ENCODE measurements at regions of chr10 and their contacts with region 1.

Region 1: DNA sequence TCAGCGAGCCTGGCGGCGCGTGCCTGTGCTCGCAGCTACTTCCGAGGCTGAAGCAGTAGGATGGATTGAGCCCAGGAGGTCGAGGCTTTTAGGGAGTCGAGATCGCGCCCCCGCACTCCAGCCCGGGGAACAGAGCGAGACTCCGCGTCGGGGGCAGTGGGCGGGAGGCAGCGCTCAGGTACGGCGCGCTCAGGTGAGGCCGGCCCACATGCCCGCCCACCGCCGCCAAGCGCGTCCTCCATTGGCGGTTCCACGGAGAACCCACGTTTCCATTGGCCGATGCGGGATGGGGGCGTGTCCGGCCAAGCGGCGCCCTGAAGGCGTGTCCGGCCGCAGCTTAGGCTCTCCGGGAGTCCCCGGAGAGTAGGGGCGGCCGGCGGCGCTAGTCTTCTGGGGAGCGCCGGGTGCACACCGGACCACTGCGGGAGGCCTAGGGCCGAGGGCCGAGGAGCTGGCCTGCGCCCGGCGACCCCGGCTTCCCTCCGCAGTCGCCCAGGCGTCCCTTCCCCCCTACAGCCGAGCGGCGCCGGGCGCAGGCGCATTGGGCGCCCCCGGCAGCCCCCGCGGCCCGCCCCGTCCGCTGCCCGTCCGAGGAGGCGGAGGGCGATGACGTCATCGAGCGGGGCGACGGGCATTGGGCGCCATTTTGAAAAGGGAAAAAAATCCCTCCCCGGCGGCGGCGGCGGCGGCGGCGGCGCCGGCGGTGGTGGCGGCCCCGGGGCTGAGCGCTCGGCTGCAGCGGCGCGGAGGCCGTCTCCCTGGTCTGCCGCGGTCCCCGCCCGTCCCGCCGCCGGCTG is at the start of gene PPP2R2D:
- DNase-seq: peak; percentile 94 to 96 (median 95)
- ATAC-seq: peak; percentile 96 to 98 (median 96)
- H3K4me3 ChIP-seq: peak within 1 kb of the TSS; percentile 70 to 100 (median 89)
- H3K27ac ChIP-seq: peak within 1 kb of the TSS; percentile 92 to 99 (median 98)
- H3K4me1 ChIP-seq: peaks cover 0 to 46% (median 38%) of the 10 kb centered on the region in 12 donors
- H3K27me3 ChIP-seq: peaks cover 0 to 13% (median 4%) of the 10 kb centered on the region in 9 donors
- CTCF ChIP-seq: no peak
- POLR2A ChIP-seq: peak in 1 of 2 donors; percentile 65
- total RNA-seq, gene PPP2R2D: 29.4 to 43.4 (median 37.3) TPM

Region 2: DNA sequence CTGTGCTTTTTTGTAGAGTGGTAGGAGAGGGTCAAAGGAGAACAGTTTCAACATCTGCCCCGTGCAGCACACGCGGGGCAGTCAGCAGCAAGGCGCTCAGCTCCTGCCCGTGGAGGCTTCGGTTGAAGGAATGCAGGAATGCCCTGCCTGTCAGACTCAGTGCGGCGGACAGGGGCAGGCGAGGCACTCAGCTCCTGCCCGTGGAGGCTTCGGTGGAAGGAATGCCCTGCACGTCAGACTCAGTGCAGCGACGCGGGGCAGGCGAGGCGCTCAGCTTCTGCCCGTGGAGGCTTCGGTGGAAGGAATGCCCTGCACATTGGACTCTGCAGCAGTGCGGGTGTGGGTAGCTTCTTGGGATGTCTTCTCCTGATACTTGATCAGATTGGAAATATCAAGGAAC is 37.3 kb after region 1 on chr10:
- intact Hi-C with region 1: loop called in 3 of 10 experiments (anchors 5 kb)
- DNase-seq: peak in 2 of 5 donors; percentile 46 to 53
- ATAC-seq: peak; percentile 77 to 91 (median 89)
- H3K4me3 ChIP-seq: no peak overlapping the region
- H3K27ac ChIP-seq: no peak overlapping the region
- H3K4me1 ChIP-seq: peaks cover 0 to 45% (median 13%) of the 10 kb centered on the region in 12 donors
- H3K27me3 ChIP-seq: no peaks in the 10 kb centered on the region
- CTCF ChIP-seq: no peak
- POLR2A ChIP-seq: no peak

Region 3: GRCh38 chr10:131943021-131943814 is 42.7 kb after region 1 on chr10:
- intact Hi-C with region 1: loop called in 3 of 10 experiments (anchors 5 kb)
- DNase-seq: peak in 1 of 5 donors; percentile 48
- ATAC-seq: peak; percentile 75 to 85 (median 78)
- H3K4me3 ChIP-seq: no peak overlapping the region
- H3K27ac ChIP-seq: no peak overlapping the region
- H3K4me1 ChIP-seq: peaks cover 0 to 5% (median 0%) of the 10 kb centered on the region in 12 donors
- H3K27me3 ChIP-seq: no peaks in the 10 kb centered on the region
- CTCF ChIP-seq: peak; percentile 17 to 54 (median 34)
- POLR2A ChIP-seq: no peak

Region 4: GRCh38 chr10:131972474-131973071 is 72.0 kb after region 1 on chr10:
- intact Hi-C with region 1: loop called in 7 of 10 experiments (anchors 5 to 10 kb)
- DNase-seq: peak; percentile 78 to 85 (median 84)
- ATAC-seq: peak; percentile 70 to 89 (median 73)
- H3K4me3 ChIP-seq: peak overlapping the region in 8 of 12 donors; percentile 5 to 24 (median 10)
- H3K27ac ChIP-seq: peak overlapping the region in 11 of 12 donors; percentile 40 to 82 (median 72)
- H3K4me1 ChIP-seq: peaks cover 10 to 55% (median 32%) of the 10 kb centered on the region in 12 donors
- H3K27me3 ChIP-seq: no peaks in the 10 kb centered on the region
- CTCF ChIP-seq: no peak
- POLR2A ChIP-seq: no peak

Region 5: DNA sequence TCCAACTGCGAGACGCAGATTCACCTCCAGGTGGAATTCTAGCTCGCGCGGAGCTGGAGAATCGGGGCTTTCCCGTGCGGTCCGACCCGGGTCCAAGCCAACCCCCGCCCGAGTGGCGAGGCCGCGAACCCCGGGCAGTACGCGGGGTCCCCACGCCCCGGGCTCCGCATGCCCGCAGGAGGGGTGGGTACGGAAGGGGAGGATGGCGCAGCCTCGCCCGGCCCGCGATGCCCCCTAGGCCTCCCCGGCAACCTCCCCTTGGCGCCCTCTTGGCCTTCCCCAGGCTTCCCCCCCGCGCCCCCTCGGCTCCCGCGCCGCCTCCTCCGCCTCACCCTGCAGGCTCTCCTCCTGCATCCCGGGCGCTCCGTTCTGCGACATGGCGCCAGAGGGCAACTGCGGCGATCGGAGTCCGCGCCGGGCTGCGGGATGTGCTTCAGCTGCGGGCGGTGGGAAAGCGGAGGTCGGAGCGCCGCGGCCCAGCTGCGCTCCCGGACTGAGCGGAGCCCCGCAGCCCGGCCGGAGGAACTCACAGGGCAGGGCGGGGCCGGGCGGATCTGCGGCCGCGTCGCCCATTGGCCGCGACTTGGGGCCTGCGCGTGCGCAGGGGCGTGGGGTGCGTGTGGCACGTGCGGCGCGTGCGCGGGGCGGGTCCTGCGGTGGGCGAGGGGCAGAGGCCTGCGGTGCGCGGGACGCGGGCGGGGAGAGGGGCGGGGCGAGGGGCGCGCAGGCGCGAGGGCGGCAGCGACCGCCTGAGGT is 81.1 kb after region 1 on chr10 and contains the start of gene BNIP3:
- intact Hi-C with region 1: loop called in 5 of 10 experiments (anchors 5 to 10 kb)
- DNase-seq: peak; percentile 95 to 99 (median 96)
- ATAC-seq: peak; percentile 89 to 95 (median 92)
- H3K4me3 ChIP-seq: peak within 1 kb of the TSS; percentile 72 to 99 (median 90)
- H3K27ac ChIP-seq: peak within 1 kb of the TSS; percentile 6 to 90 (median 80)
- H3K4me1 ChIP-seq: peaks cover 0 to 51% (median 28%) of the 10 kb centered on the region in 12 donors
- H3K27me3 ChIP-seq: peaks cover 0 to 9% (median 0%) of the 10 kb centered on the region in 9 donors
- CTCF ChIP-seq: peak in 1 of 12 donors; percentile 14
- POLR2A ChIP-seq: peak; percentile 95 to 99
- total RNA-seq, gene BNIP3: 97.1 to 711 (median 130) TPM

Region 6: DNA sequence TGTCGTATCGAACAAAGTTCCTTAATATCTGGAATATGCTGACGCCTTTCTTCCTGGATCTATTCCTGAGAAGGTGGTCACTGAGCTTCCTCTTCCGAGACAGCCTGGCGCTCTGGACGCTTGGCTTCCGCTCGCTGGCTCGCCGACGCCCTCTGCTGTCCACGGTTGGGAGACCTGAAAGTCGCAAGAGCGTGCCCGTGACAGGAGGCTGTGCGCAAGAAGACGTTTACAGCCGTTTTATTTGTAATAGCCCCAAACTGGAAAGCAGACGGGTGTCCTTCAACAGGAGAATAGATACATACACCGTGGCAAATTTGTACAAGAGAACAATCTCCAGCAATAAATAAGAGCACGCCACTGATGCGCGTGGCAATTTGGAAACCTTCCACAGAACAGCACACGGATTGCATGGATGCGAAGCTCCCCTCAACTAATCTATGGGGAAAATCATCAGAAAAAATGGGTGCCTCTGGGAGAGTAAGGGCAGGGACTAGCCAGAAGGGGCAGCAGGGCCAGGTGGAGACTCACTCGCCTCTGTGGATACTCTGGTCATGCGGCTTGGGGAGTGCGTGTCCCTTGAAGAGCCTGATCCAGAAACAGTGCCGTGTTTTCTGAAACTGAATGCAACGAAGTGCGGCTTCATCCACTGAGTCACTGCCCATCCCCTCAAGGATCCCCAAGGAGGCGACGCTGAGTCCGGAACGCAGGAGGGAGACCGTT is 122.7 kb after region 1 on chr10:
- intact Hi-C with region 1: loop called in 1 of 10 experiments (anchors 5 kb)
- DNase-seq: peak; percentile 74 to 90 (median 80)
- ATAC-seq: peak; percentile 75 to 97 (median 87)
- H3K4me3 ChIP-seq: peak overlapping the region in 11 of 12 donors; percentile 9 to 53 (median 36)
- H3K27ac ChIP-seq: no peak overlapping the region
- H3K4me1 ChIP-seq: peaks cover 0 to 11% (median 4%) of the 10 kb centered on the region in 12 donors
- H3K27me3 ChIP-seq: peaks cover 0 to 27% (median 4%) of the 10 kb centered on the region in 9 donors
- CTCF ChIP-seq: peak; percentile 85 to 98 (median 90)
- POLR2A ChIP-seq: no peak

Measured in heart left ventricle (tissue), 16 donors.